ENCODE measurements at regions of chr16 and their contacts with region 1.

Region 1: GRCh38 chr16:50024684-50025536 is at the start of gene CNEP1R1:
- DNase-seq: peak; percentile 95
- ATAC-seq: peak; percentile 99
- H3K4me3 Mint-ChIP-seq: peak within 1 kb of the TSS; percentile 94
- H3K27ac Mint-ChIP-seq: peak within 1 kb of the TSS; percentile 92
- H3K4me1 Mint-ChIP-seq: peaks cover 14% of the 10 kb centered on the region
- H3K27me3 Mint-ChIP-seq: peaks cover 4% of the 10 kb centered on the region
- total RNA-seq, gene CNEP1R1: 25.1 to 26.9 TPM

Region 2: GRCh38 chr16:49924078-49924477 is 100.8 kb before region 1 on chr16:
- CTCF ChIA-PET with region 1: no interaction called
- POLR2A ChIA-PET with region 1: no interaction called
- DNase-seq: no peak
- ATAC-seq: no peak
- H3K4me3 Mint-ChIP-seq: no peak overlapping the region
- H3K27ac Mint-ChIP-seq: no peak overlapping the region
- H3K4me1 Mint-ChIP-seq: no peaks in the 10 kb centered on the region
- H3K27me3 Mint-ChIP-seq: peaks cover 7% of the 10 kb centered on the region

Region 3: DNA sequence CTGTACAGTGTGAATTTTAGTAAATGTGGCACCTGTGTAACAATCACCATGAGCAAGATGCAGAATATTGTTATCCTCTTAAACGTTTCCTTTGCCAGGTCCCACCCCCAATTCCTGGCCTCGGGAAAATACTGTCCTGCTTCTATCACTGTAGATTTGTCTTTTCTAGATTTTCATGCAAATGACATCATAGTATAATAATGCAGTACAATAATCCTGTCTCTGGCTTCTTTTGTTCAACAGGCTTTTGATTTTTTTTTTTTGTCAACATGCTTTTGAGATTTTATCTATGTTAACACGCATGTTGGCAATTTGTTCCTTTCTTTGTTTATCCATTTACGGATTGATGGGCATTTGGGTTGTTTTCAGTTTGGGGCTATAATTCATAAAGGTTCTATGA is 20.5 kb after region 1 on chr16:
- CTCF ChIA-PET with region 1: interaction called, 13 read pairs
- POLR2A ChIA-PET with region 1: no interaction called
- DNase-seq: no peak
- ATAC-seq: no peak
- H3K4me3 Mint-ChIP-seq: no peak overlapping the region
- H3K27ac Mint-ChIP-seq: no peak overlapping the region
- H3K4me1 Mint-ChIP-seq: no peaks in the 10 kb centered on the region
- H3K27me3 Mint-ChIP-seq: peaks cover 12% of the 10 kb centered on the region

Region 4: DNA sequence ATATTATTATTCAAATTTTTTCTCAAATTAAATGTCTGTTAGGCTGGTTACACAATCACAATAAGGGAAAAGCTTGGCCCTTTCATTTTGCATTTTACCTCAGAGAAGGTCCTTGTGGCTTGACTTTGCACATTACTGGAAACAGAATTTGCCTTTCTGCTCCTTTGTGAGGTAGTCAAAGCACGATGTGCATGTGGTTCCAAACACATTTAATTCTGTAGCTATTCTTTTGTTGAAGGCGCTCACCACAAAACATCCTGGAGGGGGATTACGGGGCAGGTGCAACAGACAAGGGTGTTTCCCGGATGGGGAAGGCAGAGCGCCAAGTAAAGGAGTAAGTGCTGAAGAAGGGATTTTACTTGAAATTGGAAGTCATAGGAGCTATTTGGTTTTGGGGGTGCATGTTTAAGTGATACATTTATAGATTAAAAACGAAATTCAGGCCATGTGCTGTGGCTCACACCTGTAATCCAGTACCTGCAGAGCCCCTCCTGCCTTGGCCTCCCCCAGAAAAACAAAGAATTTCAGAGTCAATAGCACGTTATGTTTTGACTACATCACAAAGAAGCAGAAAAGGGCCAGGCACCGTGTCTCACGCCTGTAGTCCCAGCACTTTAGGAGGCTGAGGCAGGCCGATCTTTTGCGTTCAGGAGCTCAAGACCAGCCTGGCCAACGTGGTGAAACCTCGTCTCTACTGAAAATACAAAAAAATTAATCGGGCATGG is 97.0 kb after region 1 on chr16:
- CTCF ChIA-PET with region 1: interaction called, 18 read pairs
- POLR2A ChIA-PET with region 1: interaction called, 6 read pairs
- DNase-seq: peak; percentile 51
- ATAC-seq: peak; percentile 61
- H3K4me3 Mint-ChIP-seq: peak overlapping the region; percentile 32
- H3K27ac Mint-ChIP-seq: peak overlapping the region; percentile 31
- H3K4me1 Mint-ChIP-seq: peaks cover 29% of the 10 kb centered on the region
- H3K27me3 Mint-ChIP-seq: no peaks in the 10 kb centered on the region

Region 5: DNA sequence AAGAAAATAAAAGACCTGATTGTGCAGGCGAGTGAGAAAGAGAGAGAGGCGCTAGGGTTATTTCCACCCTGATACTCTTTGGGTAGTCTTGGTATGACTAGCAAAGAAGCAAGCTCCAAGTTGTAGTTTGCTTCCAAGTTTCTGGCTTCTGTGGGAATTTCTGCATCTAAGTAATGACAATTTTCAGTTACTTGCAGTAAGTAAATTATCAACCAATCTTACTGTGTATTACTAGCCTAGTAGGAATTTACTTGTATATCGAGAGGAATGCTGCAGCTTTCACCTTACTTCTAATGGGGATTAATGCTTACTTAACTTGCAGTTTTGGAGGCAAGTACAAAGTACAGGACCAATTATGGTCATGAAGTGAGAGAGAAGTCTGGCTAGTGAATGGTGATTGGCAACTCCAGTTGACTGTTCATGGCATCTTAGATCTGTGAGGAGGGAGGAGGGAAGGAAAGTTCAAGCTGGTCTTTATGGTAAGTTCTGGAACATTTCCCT is 160.1 kb after region 1 on chr16:
- CTCF ChIA-PET with region 1: no interaction called
- POLR2A ChIA-PET with region 1: no interaction called
- DNase-seq: no peak
- ATAC-seq: no peak
- H3K4me3 Mint-ChIP-seq: no peak overlapping the region
- H3K27ac Mint-ChIP-seq: no peak overlapping the region
- H3K4me1 Mint-ChIP-seq: peaks cover 9% of the 10 kb centered on the region
- H3K27me3 Mint-ChIP-seq: no peaks in the 10 kb centered on the region

Region 6: GRCh38 chr16:50202926-50203624 is 178.2 kb after region 1 on chr16:
- CTCF ChIA-PET with region 1: interaction called, 10 read pairs
- POLR2A ChIA-PET with region 1: no interaction called
- DNase-seq: no peak
- ATAC-seq: no peak
- H3K4me3 Mint-ChIP-seq: no peak overlapping the region
- H3K27ac Mint-ChIP-seq: no peak overlapping the region
- H3K4me1 Mint-ChIP-seq: peaks cover 44% of the 10 kb centered on the region
- H3K27me3 Mint-ChIP-seq: no peaks in the 10 kb centered on the region

Region 7: DNA sequence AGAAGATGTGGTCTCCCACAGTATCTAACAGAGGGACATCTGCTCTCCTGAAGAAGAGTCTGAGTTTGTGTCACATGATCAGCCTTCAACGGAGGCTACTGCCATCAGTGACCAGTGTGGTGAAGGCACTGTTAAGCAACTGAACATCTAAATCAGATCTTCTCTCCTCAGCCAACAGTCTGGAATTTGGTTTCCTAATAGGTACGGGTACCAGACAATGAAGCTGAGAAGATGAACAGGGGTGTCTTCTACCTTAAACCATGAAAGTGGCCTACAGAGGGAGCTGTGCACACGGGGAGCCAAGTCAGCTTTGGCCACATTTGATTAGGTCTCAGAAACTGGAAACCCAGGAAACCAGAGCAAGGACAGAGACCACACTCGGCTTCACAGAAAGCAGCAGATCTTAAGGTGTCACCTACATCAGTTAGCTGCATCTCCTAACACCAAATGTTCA is 302.1 kb after region 1 on chr16:
- CTCF ChIA-PET with region 1: interaction called, 11 read pairs
- POLR2A ChIA-PET with region 1: no interaction called
- DNase-seq: peak; percentile 88
- ATAC-seq: peak; percentile 96
- H3K4me3 Mint-ChIP-seq: no peak overlapping the region
- H3K27ac Mint-ChIP-seq: peak overlapping the region; percentile 78
- H3K4me1 Mint-ChIP-seq: peaks cover 62% of the 10 kb centered on the region
- H3K27me3 Mint-ChIP-seq: no peaks in the 10 kb centered on the region

Region 8: GRCh38 chr16:50368410-50369132 is 343.7 kb after region 1 on chr16 and contains the start of gene BRD7:
- CTCF ChIA-PET with region 1: interaction called, 11 read pairs
- POLR2A ChIA-PET with region 1: interaction called, 4 read pairs
- DNase-seq: peak; percentile 69
- ATAC-seq: peak; percentile 84
- H3K4me3 Mint-ChIP-seq: peak within 1 kb of the TSS; percentile 82
- H3K27ac Mint-ChIP-seq: peak within 1 kb of the TSS; percentile 93
- H3K4me1 Mint-ChIP-seq: peaks cover 41% of the 10 kb centered on the region
- H3K27me3 Mint-ChIP-seq: peaks cover 2% of the 10 kb centered on the region
- total RNA-seq, gene BRD7: 88.9 to 90.4 TPM

Measured in activated CD8-positive, alpha-beta T cell treated with anti-CD3 and anti-CD28 coated beads, Interleukin-2, amount 10 ng/mL, durations not matched to agents 7 days and 5 days (primary cell).